ENCODE measurements at regions of chr10 and their contacts with region 1.

Region 1: GRCh38 chr10:29857843-29858701 is 201.3 kb downstream of the JCAD start:
- DNase-seq: peak; percentile 70 to 75
- ATAC-seq: peak; percentile 94 to 96
- H3K4me3 ChIP-seq: no peak overlapping the region
- H3K27ac ChIP-seq: peak overlapping the region; percentile 45 to 75
- H3K4me1 ChIP-seq: peaks cover 19% of the 10 kb centered on the region; the same call in 2 of the 3 replicates
- CTCF ChIP-seq: peak; percentile 86
- EP300 ChIP-seq: no peak
- POLR2A ChIP-seq: no peak
- RAD21 ChIP-seq: peak; percentile 92 to 94

Region 2: DNA sequence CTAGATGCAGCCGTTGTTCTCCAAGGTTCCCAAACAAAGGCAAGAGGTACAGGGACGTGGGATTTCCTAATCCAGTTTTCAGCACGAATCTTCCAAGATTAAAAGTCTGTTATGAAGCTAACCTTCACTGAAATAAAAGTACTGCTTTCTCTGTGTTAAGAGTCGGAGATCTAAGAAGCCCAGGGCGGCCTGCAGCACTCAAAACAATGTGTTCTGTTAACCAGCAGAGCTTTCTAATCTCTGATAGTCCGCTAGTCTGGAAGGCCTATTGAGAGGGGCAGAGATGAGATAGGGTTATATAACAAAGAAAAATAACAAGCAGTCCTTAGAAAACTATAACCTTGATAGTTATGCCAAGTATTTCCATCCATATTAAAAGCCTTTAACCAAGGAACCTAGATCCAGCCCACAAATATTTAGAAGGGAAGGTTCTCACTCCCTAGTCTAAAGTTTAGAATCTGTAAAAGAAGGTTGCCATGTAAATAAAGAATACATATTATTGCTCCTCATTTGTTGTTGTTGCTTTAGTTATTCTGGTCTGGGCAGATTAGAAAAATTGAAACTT is 117.0 kb before region 1 on chr10:
- CTCF ChIA-PET with region 1: interaction called, 18 read pairs
- POLR2A ChIA-PET with region 1: no interaction called
- DNase-seq: no peak
- ATAC-seq: no peak
- H3K4me3 ChIP-seq: no peak overlapping the region
- H3K27ac ChIP-seq: no peak overlapping the region
- H3K4me1 ChIP-seq: 0 out of 3 replicates have a peak, but pooled peaks cover 3% of the 10 kb centered on the region
- CTCF ChIP-seq: no peak
- EP300 ChIP-seq: no peak
- POLR2A ChIP-seq: no peak
- RAD21 ChIP-seq: no peak

Region 3: DNA sequence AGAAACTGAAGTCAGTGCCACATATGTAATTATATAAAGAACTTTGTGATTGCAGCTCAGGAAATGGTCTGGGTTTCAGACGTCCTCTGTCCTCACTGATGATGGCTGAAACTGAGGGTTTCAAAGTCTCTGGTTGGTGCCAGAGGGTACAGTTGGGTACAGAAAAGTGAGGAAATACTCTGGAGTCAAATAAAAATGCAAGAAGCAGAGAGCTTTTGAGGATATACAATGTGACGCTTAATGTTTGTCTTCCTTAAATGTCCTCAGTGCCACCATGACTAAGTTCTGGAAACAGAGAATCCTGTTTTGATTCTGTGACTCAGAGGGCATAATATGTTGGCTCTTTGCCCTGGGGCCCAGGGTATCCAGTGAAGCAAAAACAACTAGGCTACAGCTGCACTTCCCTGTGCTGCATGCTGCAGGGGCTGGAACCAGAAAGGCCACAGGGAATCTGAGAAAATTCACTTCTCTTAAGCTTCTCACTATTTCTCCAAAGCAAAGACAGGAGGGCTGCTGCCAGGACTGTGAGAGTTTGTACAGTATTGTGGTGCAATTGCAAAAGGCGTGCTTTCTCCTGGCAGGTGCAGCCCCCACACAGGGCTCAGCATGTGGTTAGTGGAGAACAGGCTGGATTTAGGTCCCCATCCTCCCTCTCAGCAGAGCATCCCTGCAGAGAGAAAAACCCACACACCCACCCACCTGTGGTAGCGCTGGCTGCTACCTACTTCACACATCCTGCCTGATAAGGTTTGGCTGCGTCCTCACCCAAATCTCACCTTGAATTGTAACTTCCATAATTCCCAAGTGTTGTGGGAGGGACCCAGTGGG is 53.8 kb before region 1 on chr10:
- CTCF ChIA-PET with region 1: interaction called, 12 read pairs
- POLR2A ChIA-PET with region 1: no interaction called
- DNase-seq: peak; percentile 82 to 85
- ATAC-seq: peak; percentile 80 to 83
- H3K4me3 ChIP-seq: peak overlapping the region; percentile 21; the same call in 1 of the 3 replicates
- H3K27ac ChIP-seq: peak overlapping the region; percentile 79 to 86
- H3K4me1 ChIP-seq: peaks cover 55% of the 10 kb centered on the region
- CTCF ChIP-seq: no peak
- EP300 ChIP-seq: peak; percentile 34 to 81; a peak in 3 of 5 replicates
- POLR2A ChIP-seq: no peak
- RAD21 ChIP-seq: no peak; a peak in 2 of 5 replicates

Region 4: GRCh38 chr10:29811751-29812449 is 46.2 kb before region 1 on chr10:
- CTCF ChIA-PET with region 1: interaction called, 10 read pairs
- POLR2A ChIA-PET with region 1: no interaction called
- DNase-seq: peak; percentile 33 to 89
- ATAC-seq: peak; percentile 72 to 79
- H3K4me3 ChIP-seq: no peak overlapping the region
- H3K27ac ChIP-seq: peak overlapping the region; percentile 73 to 80
- H3K4me1 ChIP-seq: peaks cover 37% of the 10 kb centered on the region
- CTCF ChIP-seq: no peak
- EP300 ChIP-seq: peak; percentile 69 to 83; a peak in 3 of 5 replicates
- POLR2A ChIP-seq: no peak
- RAD21 ChIP-seq: no peak; a peak in 1 of 5 replicates

Region 5: GRCh38 chr10:29841724-29842649 is 16.1 kb before region 1 on chr10:
- CTCF ChIA-PET with region 1: interaction called, 10 read pairs
- POLR2A ChIA-PET with region 1: no interaction called
- DNase-seq: peak; percentile 56 to 72
- ATAC-seq: peak; percentile 89 to 90
- H3K4me3 ChIP-seq: no peak overlapping the region
- H3K27ac ChIP-seq: peak overlapping the region in 1 of 2 experiments; percentile 34; a peak in 1 of 6 replicates
- H3K4me1 ChIP-seq: peaks cover 8% of the 10 kb centered on the region
- CTCF ChIP-seq: no peak
- EP300 ChIP-seq: no peak
- POLR2A ChIP-seq: no peak
- RAD21 ChIP-seq: no peak

Region 6: GRCh38 chr10:29881811-29882210 is 23.7 kb after region 1 on chr10:
- CTCF ChIA-PET with region 1: no interaction called
- POLR2A ChIA-PET with region 1: no interaction called
- DNase-seq: no peak
- ATAC-seq: no peak
- H3K4me3 ChIP-seq: no peak overlapping the region
- H3K27ac ChIP-seq: no peak overlapping the region
- H3K4me1 ChIP-seq: no peaks in the 10 kb centered on the region
- CTCF ChIP-seq: no peak
- EP300 ChIP-seq: no peak
- POLR2A ChIP-seq: no peak
- RAD21 ChIP-seq: no peak

Measured in A549 (cell line).